ENCODE measurements at regions of chr1 and their contacts with region 1.

Region 1: DNA sequence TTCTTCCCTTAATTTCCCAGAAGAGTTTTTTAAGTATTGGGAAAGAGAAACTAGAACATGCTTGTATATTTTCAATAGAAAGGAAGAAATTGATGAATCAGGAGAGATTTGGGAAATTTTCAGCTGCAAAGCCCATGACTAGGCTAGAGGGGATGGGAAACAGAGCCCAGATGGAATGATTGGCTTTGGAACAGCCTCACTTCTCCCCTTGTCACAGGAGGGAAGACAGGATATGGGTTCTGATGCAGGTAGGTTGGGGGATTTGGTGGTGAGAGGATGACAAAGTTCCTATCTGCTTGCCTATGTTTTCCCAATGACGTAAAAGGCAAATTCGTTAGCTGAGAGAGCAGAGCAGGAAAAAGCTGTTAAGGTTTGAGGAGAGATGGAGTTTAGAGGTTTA is 31.0 kb upstream of the ARID1A start:
- DNase-seq: no peak
- H3K27ac ChIP-seq: no peak overlapping the region
- CTCF ChIP-seq: no peak

Region 2: DNA sequence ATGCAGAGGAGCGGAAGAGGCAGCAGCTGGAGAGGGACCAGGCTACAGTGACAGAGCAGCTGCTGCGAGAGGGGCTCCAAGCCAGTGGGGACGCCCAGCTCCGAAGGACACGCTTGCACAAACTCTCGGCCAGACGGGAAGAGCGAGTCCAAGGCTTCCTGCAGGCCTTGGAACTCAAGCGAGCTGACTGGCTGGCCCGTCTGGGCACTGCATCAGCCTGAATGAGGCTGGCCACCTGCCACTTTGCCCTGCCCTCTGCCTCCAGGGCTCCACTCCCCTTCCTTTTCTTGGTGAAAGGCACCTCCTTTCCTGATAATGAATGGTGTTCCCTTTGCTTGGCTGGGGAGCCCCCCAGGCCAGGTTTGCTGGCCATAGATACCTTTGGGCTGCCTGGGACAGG is 195.9 kb before region 1 on chr1:
- CTCF ChIA-PET with region 1: no interaction called
- POLR2A ChIA-PET with region 1: no interaction called
- DNase-seq: no peak
- H3K27ac ChIP-seq: peak overlapping the region; percentile 98
- CTCF ChIP-seq: no peak

Region 3: DNA sequence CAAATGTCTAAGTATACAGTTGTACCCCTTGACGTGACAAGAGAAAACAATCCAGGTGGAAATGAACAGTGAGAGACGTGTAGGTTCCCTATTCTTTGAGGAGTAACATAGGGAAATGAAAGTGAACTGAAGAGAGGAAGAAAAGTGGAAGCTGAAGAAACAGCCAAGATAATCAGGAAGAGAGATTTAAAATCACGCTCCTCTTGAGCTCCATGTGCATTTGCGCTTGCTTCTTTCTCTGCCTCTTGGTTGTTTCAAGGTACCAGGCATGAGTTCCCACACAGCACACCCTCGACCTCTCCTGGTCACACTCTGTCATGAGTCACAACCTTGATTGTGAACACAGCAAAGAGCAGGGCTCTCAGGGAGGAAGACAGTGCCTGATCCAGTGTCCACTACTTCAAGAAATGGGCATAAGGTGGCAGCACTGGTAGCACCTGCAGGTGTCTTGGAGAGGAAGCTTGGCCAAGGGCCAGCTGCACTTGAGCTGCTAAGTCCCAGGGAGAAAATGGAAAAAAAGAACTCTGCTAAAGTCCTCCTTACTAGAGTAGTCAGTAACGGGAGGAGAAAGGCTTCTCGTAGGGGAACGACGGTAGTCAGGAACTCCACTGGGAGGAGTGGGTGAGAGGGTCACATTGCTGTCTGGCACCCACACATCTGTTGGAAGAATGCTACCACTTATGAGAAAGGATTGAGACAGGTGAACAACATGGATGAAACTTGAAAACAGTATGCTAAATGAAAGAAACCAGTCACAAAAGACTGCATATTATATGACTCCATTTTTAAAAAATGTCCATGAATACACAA is 12.7 kb after region 1 on chr1:
- CTCF ChIA-PET with region 1: interaction called, 14 read pairs
- POLR2A ChIA-PET with region 1: no interaction called
- DNase-seq: peak; percentile 83
- H3K27ac ChIP-seq: no peak overlapping the region
- CTCF ChIP-seq: peak; percentile 90

Region 4: GRCh38 chr1:26723013-26723991 is 58.5 kb after region 1 on chr1:
- CTCF ChIA-PET with region 1: no interaction called
- POLR2A ChIA-PET with region 1: no interaction called
- DNase-seq: peak; percentile 87
- H3K27ac ChIP-seq: peak overlapping the region; percentile 76
- CTCF ChIP-seq: no peak